Mammary epithelial cell (primary cell): ENCODE measurements at regions of chr13 and their contacts with region 1.

Region 1: GRCh38 chr13:40206241-40207000 is 460.0 kb downstream of the FOXO1 start:
- DNase-seq: peak; percentile 98
- H3K4me3 ChIP-seq: no peak overlapping the region
- H3K27ac ChIP-seq: peak overlapping the region; percentile 86
- H3K4me1 ChIP-seq: peaks cover 34% of the 10 kb centered on the region
- H3K27me3 ChIP-seq: no peaks in the 10 kb centered on the region
- CTCF ChIP-seq: no peak

Region 2: GRCh38 chr13:40061466-40062450 is 144.7 kb before region 1 on chr13:
- CTCF ChIA-PET with region 1: no interaction called
- dilution Hi-C with region 1: no loop called
- in situ Hi-C with region 1: no loop called
- intact Hi-C with region 1: no loop called
- DNase-seq: peak; percentile 86
- H3K4me3 ChIP-seq: no peak overlapping the region
- H3K27ac ChIP-seq: peak overlapping the region; percentile 76
- H3K4me1 ChIP-seq: peaks cover 63% of the 10 kb centered on the region
- H3K27me3 ChIP-seq: no peaks in the 10 kb centered on the region
- CTCF ChIP-seq: no peak

Region 3: DNA sequence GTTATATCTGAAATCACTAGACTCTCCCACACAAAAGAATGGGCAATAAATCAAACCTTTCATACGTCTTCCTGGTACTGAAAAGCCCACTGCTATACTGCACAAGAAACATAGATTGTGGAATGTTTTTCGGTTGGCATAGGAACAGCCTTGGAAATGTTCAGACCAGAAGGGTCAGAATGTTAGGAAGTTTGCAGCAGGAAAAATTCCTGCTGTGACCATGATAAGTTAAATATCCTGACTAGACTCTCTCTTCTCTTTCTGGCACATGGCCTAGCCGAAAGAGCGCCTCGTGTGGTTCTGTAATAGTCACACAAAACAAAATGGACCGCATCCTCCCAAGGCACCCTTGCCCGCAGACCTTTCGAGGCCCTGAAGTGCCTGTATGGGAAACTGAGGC is 123.8 kb before region 1 on chr13:
- CTCF ChIA-PET with region 1: interaction called, 16 read pairs
- dilution Hi-C with region 1: no loop called
- in situ Hi-C with region 1: no loop called
- intact Hi-C with region 1: no loop called
- DNase-seq: no peak
- H3K4me3 ChIP-seq: no peak overlapping the region
- H3K27ac ChIP-seq: no peak overlapping the region
- H3K4me1 ChIP-seq: peaks cover 2% of the 10 kb centered on the region
- H3K27me3 ChIP-seq: no peaks in the 10 kb centered on the region
- CTCF ChIP-seq: no peak

Region 4: DNA sequence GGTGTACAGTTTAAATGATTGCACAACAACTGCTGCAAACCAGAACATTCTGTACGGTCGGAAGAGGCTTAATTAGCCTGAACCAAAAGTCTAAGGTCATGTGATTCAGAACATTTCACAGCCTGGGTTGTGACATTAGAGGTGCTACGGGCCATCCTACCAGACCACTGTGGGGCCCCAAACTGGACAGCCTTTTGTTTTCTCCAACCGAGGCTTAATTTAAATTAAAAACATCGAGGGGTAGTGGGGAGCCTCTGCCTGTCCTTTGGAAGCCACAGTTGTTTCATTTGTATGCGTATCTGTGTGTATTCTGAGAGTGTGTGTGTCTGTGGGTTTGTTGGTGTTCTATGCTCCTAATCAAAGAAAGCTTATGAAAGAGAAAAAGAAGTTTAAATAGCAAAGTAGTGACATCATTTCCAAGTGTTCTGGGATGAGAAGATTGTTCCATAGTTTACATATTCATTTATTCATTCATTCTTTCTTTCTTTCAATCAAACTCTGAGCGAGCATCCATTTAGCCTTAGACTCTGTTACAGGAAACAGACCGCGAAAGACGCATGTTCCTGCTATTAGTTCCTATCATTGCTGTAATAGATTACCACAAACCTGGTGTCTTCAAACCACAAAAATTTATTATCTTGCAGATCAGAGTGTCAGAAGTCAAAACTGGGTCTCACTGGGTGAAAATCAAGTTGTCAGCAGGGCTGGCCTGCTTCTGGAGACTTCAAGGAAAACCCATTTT is 15.2 kb after region 1 on chr13:
- CTCF ChIA-PET with region 1: no interaction called
- dilution Hi-C with region 1: no loop called
- in situ Hi-C with region 1: no loop called
- intact Hi-C with region 1: loop called (anchors 1 kb)
- DNase-seq: peak; percentile 83
- H3K4me3 ChIP-seq: no peak overlapping the region
- H3K27ac ChIP-seq: peak overlapping the region; percentile 56
- H3K4me1 ChIP-seq: peaks cover 19% of the 10 kb centered on the region
- H3K27me3 ChIP-seq: no peaks in the 10 kb centered on the region
- CTCF ChIP-seq: no peak

Region 5: DNA sequence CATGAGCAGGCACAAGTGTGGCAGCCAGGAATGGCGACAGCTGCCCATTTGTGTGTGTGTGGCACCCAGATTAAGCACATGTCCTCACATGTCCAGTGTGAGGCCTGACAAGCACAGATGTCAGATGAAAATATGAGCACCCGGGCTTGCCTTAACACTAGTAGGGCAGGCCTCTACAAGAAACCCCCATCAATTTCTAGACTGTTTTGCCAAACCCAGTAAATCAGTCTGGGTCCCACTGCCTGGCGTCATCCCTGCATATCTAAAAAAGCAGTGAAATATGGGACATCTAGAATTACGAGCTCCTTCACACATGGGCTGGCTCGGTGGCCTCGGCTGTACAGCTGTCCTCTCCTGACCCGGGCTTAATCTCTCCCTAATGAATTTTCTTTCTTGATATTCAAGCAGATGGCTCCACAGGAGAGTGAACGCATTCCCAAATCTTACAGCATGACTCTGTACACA is 27.3 kb after region 1 on chr13:
- CTCF ChIA-PET with region 1: no interaction called
- dilution Hi-C with region 1: no loop called
- in situ Hi-C with region 1: no loop called
- intact Hi-C with region 1: loop called (anchors 2 kb)
- DNase-seq: peak; percentile 75
- H3K4me3 ChIP-seq: no peak overlapping the region
- H3K27ac ChIP-seq: peak overlapping the region; percentile 16
- H3K4me1 ChIP-seq: peaks cover 30% of the 10 kb centered on the region
- H3K27me3 ChIP-seq: no peaks in the 10 kb centered on the region
- CTCF ChIP-seq: no peak